A673 (cell line): ENCODE measurements at regions of chr10 and their contacts with region 1.

Region 1: GRCh38 chr10:124106241-124106879 is 13.0 kb upstream of the CHST15 start:
- DNase-seq: no peak
- H3K4me3 ChIP-seq: no peak overlapping the region
- H3K27ac ChIP-seq: no peak overlapping the region
- H3K4me1 ChIP-seq: no peaks in the 10 kb centered on the region
- H3K27me3 ChIP-seq: no peaks in the 10 kb centered on the region
- CTCF ChIP-seq: no peak

Region 2: DNA sequence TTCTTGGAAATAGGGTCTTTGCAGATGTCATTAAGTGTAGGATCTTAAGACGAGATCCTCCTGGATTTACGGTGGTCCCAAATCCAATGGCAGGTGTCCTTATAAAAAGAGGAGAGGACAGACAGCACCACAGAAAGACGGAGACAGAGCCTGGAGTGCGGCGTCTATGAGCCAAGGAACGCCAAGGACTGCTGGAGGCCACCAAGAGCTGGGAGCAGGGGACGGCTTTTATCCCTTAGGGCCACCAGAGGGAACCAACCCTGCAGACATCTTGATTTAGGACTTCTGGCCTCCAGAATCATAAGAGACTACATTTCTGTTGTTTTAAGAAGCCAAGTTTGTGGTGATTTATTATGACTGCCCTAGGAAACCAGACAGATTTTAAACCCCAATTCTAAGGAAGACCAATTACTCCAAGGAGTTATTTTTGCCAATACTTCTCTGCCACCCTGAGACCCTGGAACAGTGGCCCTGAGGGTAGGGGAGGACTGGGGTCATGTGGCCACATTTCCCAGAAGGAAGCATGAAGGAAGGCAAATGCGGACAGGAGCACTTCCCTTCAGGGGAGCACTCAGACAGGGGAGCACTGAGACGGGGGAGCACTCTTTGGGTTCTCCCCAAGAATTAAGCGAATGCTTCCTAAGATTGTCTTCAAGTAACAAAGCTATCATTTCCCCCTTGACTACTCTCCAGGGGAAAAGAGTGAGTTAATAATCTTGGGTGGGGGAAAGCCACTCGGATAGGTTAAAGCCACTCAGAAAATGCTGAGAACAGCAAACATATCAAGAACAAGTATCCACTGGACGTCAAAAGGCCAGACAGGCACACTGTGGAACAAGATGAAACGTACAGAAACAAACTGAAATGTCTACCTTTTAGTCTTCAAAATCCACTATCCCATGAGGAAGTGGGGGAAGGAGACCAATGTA is 80.4 kb before region 1 on chr10:
- CTCF ChIA-PET with region 1: no interaction called
- POLR2A ChIA-PET with region 1: interaction called, 10 read pairs
- intact Hi-C with region 1: no loop called
- DNase-seq: no peak
- H3K4me3 ChIP-seq: no peak overlapping the region
- H3K27ac ChIP-seq: no peak overlapping the region
- H3K4me1 ChIP-seq: no peaks in the 10 kb centered on the region
- H3K27me3 ChIP-seq: peaks cover 8% of the 10 kb centered on the region
- CTCF ChIP-seq: 0 out of 2 replicates have a peak, but pooled peaks have one; percentile 30

Region 3: GRCh38 chr10:124053971-124054370 is 52.4 kb before region 1 on chr10:
- CTCF ChIA-PET with region 1: no interaction called
- POLR2A ChIA-PET with region 1: no interaction called
- intact Hi-C with region 1: no loop called
- DNase-seq: peak; percentile 27
- H3K4me3 ChIP-seq: no peak overlapping the region
- H3K27ac ChIP-seq: no peak overlapping the region
- H3K4me1 ChIP-seq: peaks cover 6% of the 10 kb centered on the region
- H3K27me3 ChIP-seq: no peaks in the 10 kb centered on the region
- CTCF ChIP-seq: no peak